ENCODE measurements at regions of chr17 and their contacts with region 1.

Region 1: GRCh38 chr17:31094600-31095238 is at the start of gene NF1:
- DNase-seq: peak; percentile 96
- H3K4me3 Mint-ChIP-seq: peak within 1 kb of the TSS; percentile 91
- H3K27ac Mint-ChIP-seq: peak within 1 kb of the TSS; percentile 87
- H3K4me1 Mint-ChIP-seq: peaks cover 16% of the 10 kb centered on the region
- H3K27me3 Mint-ChIP-seq: no peaks in the 10 kb centered on the region
- CTCF ChIP-seq: no peak
- total RNA-seq, gene NF1: 58.5 and 60.2 TPM in 2 replicates

Region 2: DNA sequence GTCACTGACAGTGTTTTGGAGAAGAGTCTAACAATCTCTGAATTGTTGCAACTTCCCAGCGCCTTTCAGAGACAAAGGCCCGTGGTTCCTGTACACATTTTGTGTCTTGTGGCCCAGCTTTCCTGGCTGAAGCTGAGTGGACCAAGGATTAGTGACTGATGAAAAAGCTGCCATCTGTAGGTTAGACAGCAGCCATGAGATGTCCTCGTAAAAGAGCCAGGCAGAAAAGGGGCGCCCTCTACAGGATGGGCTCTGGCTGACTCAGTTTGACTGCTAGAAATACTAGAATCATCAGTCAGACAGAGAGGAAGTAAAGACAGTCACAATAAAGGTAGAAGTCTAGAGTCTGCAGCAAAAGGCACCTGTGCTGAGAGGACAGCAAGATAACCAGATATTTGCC is 26.4 kb before region 1 on chr17:
- CTCF ChIA-PET with region 1: interaction called, 7 read pairs
- POLR2A ChIA-PET with region 1: interaction called, 18 read pairs
- intact Hi-C with region 1: loop called (anchors 2 kb)
- DNase-seq: peak; percentile 55
- H3K4me3 Mint-ChIP-seq: no peak overlapping the region
- H3K27ac Mint-ChIP-seq: peak overlapping the region; percentile 66
- H3K4me1 Mint-ChIP-seq: peaks cover 32% of the 10 kb centered on the region
- H3K27me3 Mint-ChIP-seq: no peaks in the 10 kb centered on the region
- CTCF ChIP-seq: peak; percentile 27